Activated T-helper 1 cell treated with anti-CD3 and anti-CD28 coated beads, Interleukin-12 subunit alpha, Interleukin-12 subunit beta, Interleukin-2, Interleukin-4 antibody, amounts not matched to agents 30 ng/mL and 10 ng/mL and 1 ng/mL, durations not matched to agents 14 hours and 24 hours and 36 hours (primary cell): ENCODE measurements at regions of chr19 and their contacts with region 1.

Region 1: GRCh38 chr19:9621156-9622037 is at the start of gene ZNF561:
- DNase-seq: peak; percentile 80
- H3K4me3 Mint-ChIP-seq: peak within 1 kb of the TSS; percentile 100
- H3K27ac Mint-ChIP-seq: peak within 1 kb of the TSS; percentile 99
- H3K4me1 Mint-ChIP-seq: peaks cover 28% of the 10 kb centered on the region
- H3K27me3 Mint-ChIP-seq: no peaks in the 10 kb centered on the region
- total RNA-seq, gene ZNF561: 33.2 and 36.7 TPM in 2 replicates

Region 2: DNA sequence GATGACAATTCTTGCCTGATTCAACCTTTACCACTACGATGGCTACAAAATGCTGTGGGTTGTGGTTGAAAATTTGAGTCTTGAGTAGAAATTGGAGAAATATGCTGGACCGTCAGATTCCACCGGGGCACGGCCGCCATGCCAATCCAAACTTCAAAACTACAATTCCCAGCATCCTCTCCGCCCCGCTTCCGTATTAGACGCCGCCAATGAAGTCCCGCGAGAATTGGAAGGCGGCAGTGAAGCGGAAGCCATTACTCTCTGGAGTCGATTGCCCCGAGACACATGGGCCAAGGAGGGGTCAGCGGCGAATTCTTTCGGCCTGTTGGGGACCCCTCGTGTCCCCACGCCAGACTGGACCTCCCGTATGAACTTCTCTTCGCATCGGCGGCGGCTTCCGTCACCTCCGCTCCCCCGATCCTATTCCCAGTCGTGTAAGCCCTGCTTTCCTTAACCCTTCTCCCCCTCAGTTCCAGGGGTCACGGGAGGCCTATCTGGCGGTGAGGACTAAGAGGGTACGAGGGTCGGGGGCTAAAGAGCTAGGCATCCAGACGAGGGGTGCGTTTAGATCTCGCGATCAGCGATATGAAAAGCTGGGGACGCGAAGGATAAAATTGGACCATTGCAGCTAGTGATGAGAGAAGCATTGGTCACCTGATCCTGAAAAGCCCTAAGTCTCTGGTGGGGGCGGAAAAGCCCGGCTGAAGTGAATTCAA is 481.1 kb before region 1 on chr19 and contains the start of gene ZNF317:
- intact Hi-C with region 1: loop called (anchors 1 kb)
- DNase-seq: peak; percentile 88
- H3K4me3 Mint-ChIP-seq: peak within 1 kb of the TSS; percentile 95
- H3K27ac Mint-ChIP-seq: peak within 1 kb of the TSS; percentile 94
- H3K4me1 Mint-ChIP-seq: peaks cover 33% of the 10 kb centered on the region
- H3K27me3 Mint-ChIP-seq: no peaks in the 10 kb centered on the region
- total RNA-seq, gene ZNF317: 50.7 and 53.3 TPM in 2 replicates

Region 3: GRCh38 chr19:9435279-9436268 is 185.8 kb before region 1 on chr19 and contains the start of gene ZNF266:
- intact Hi-C with region 1: loop called (anchors 1 kb)
- DNase-seq: peak; percentile 88
- H3K4me3 Mint-ChIP-seq: peak within 1 kb of the TSS; percentile 94
- H3K27ac Mint-ChIP-seq: peak within 1 kb of the TSS; percentile 97
- H3K4me1 Mint-ChIP-seq: peaks cover 29% of the 10 kb centered on the region
- H3K27me3 Mint-ChIP-seq: no peaks in the 10 kb centered on the region
- total RNA-seq, gene ZNF266: 25.3 and 28.2 TPM in 2 replicates

Region 4: GRCh38 chr19:9584073-9584833 is 37.1 kb before region 1 on chr19 and contains the start of gene ZNF121:
- intact Hi-C with region 1: loop called (anchors 1 kb)
- DNase-seq: peak; percentile 76
- H3K4me3 Mint-ChIP-seq: peak within 1 kb of the TSS; percentile 93
- H3K27ac Mint-ChIP-seq: peak within 1 kb of the TSS; percentile 94
- H3K4me1 Mint-ChIP-seq: peaks cover 24% of the 10 kb centered on the region
- H3K27me3 Mint-ChIP-seq: no peaks in the 10 kb centered on the region
- total RNA-seq, gene ZNF121: 63.4 and 64.8 TPM in 2 replicates

Region 5: GRCh38 chr19:9645472-9645871 is 24.1 kb after region 1 on chr19:
- intact Hi-C with region 1: no loop called
- DNase-seq: no peak
- H3K4me3 Mint-ChIP-seq: no peak overlapping the region
- H3K27ac Mint-ChIP-seq: no peak overlapping the region
- H3K4me1 Mint-ChIP-seq: no peaks in the 10 kb centered on the region
- H3K27me3 Mint-ChIP-seq: no peaks in the 10 kb centered on the region

Region 6: DNA sequence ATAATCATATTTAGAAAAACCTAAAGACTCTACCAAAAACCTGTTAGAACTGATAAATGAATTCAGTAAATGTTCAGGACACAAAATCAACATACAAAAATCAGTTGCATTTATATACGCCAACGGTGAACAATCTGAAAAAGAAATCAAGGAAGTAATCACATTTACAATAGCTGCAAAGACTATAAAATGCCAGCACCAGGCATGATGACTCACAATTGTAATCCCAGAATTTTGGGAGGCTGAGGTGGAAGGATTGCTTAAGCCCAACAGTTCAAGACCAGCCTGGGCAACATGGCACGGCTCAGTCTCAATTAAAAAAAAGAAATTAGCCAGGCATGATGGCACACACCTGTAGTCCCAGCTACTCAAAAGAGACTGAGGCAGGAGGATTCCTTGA is 46.5 kb after region 1 on chr19:
- intact Hi-C with region 1: no loop called
- DNase-seq: no peak
- H3K4me3 Mint-ChIP-seq: no peak overlapping the region
- H3K27ac Mint-ChIP-seq: no peak overlapping the region
- H3K4me1 Mint-ChIP-seq: peaks cover 7% of the 10 kb centered on the region
- H3K27me3 Mint-ChIP-seq: no peaks in the 10 kb centered on the region

Region 7: GRCh38 chr19:9818734-9819589 is 197.6 kb after region 1 on chr19 and contains the start of gene FBXL12:
- intact Hi-C with region 1: loop called (anchors 1 kb)
- DNase-seq: peak; percentile 100
- H3K4me3 Mint-ChIP-seq: peak within 1 kb of the TSS; percentile 90
- H3K27ac Mint-ChIP-seq: peak within 1 kb of the TSS; percentile 87
- H3K4me1 Mint-ChIP-seq: peaks cover 27% of the 10 kb centered on the region
- H3K27me3 Mint-ChIP-seq: no peaks in the 10 kb centered on the region
- total RNA-seq, gene FBXL12: 19.4 and 20.7 TPM in 2 replicates